ENCODE measurements at regions of chr3 and their contacts with region 1.

Region 1: DNA sequence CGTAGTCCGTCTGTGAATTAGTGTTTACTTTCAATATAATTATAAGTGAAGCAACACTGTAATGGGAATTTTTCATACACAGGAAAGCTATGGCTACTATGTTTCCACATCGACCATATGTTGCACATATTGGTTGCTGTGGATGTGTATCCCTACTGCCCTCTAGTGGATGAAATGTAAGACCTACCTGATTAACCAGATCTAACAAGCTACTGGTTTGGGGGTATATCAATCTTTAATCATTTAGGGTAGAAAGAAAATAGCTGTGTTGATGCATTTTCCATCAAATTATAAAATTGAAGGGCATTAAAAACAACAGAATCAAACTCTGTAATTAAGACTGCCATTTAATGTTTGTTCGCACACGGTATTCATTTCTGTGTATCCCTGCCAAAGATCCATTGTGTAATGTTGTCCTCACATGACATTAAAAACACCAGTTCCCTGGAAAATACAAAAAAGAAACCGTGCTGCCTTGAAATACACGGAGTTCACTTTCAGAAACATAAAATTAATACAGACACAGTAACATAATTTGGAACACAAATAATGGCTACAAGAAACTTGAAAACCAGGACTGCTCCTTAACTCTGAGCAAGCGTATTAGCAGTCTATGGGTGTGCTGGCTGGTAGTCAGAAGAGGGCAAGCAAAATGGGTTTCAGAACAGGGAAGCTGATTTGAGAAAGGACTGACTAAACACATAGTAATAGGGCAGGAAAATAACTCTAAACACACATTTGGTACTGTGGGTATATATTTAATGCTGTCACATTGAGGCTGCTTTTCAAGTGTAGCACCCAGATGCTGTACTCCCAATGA is 125.1 kb downstream of the TIGIT start:
- DNase-seq: no peak
- H3K4me3 Mint-ChIP-seq: peak overlapping the region; percentile 36
- H3K27ac Mint-ChIP-seq: peak overlapping the region; percentile 56
- H3K4me1 Mint-ChIP-seq: peaks cover 32% of the 10 kb centered on the region
- H3K27me3 Mint-ChIP-seq: no peaks in the 10 kb centered on the region

Region 2: GRCh38 chr3:113873814-113874526 is 545.0 kb before region 1 on chr3:
- CTCF ChIA-PET with region 1: no interaction called
- intact Hi-C with region 1: no loop called
- DNase-seq: no peak
- H3K4me3 Mint-ChIP-seq: no peak overlapping the region
- H3K27ac Mint-ChIP-seq: no peak overlapping the region
- H3K4me1 Mint-ChIP-seq: no peaks in the 10 kb centered on the region
- H3K27me3 Mint-ChIP-seq: no peaks in the 10 kb centered on the region

Region 3: DNA sequence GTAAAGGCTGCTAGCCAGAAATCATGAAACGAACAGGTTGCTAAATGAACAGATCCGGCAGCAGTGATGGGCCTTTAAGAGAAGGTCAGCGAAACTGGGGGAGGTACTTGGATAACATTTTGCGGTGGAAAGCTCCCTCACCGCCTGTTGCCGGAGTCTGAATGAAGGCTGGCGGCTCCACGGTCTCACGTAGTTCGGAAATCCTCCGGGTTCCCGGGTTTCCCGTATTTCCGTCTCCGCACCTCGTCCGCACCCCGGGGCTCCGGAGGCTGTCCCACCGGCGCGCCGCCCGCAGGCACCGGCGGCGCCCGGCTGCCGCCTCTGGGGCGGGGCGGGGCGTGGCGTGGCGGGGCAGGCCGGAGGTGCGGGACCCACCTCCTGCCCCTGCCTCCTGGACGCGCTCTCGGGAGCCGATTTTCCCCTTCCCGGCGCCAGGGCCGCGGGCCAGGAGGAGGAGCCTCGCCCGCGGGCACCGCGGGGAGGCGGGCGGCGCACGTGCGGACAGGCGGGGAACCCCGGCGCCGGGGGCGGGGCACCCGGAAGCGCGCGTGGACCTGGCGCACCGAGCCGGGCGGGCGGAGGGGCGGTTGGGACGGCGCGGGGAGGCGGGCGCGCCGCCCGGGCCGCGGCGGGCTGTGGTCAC is 471.4 kb before region 1 on chr3 and contains the start of gene ZDHHC23:
- CTCF ChIA-PET with region 1: no interaction called
- intact Hi-C with region 1: loop called (anchors 1 kb)
- DNase-seq: peak; percentile 61
- H3K4me3 Mint-ChIP-seq: peak within 1 kb of the TSS; percentile 68
- H3K27ac Mint-ChIP-seq: no peak within 1 kb of the TSS
- H3K4me1 Mint-ChIP-seq: peaks cover 11% of the 10 kb centered on the region
- H3K27me3 Mint-ChIP-seq: peaks cover 13% of the 10 kb centered on the region
- total RNA-seq, gene ZDHHC23: 5.4 TPM

Region 4: GRCh38 chr3:114133947-114134346 is 285.0 kb before region 1 on chr3:
- CTCF ChIA-PET with region 1: no interaction called
- intact Hi-C with region 1: no loop called
- DNase-seq: no peak
- H3K4me3 Mint-ChIP-seq: no peak overlapping the region
- H3K27ac Mint-ChIP-seq: no peak overlapping the region
- H3K4me1 Mint-ChIP-seq: no peaks in the 10 kb centered on the region
- H3K27me3 Mint-ChIP-seq: no peaks in the 10 kb centered on the region

Region 5: GRCh38 chr3:114213627-114214541 is 205.1 kb before region 1 on chr3:
- CTCF ChIA-PET with region 1: interaction called, 4 read pairs
- intact Hi-C with region 1: loop called (anchors 1 kb)
- DNase-seq: peak; percentile 88
- H3K4me3 Mint-ChIP-seq: no peak overlapping the region
- H3K27ac Mint-ChIP-seq: no peak overlapping the region
- H3K4me1 Mint-ChIP-seq: peaks cover 8% of the 10 kb centered on the region
- H3K27me3 Mint-ChIP-seq: no peaks in the 10 kb centered on the region

Region 6: DNA sequence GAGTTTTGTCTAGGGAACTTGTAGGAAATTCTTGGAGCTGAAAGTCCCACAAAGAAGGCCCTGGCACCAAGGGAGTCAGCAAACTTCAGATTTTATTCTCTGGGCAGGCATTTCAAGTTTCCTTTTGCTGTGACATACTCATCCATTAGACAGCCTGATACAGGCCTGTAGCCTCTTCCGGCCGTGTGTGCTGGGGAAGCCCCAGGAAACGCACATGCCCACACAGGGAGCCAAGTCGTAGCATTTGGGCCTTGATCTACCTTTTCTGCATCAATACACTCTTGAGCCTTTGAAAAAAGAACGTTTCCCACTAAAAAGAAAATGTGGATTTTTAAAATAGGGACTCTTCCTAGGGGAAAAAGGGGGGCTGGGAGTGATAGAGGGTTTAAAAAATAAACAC is 110.1 kb before region 1 on chr3:
- CTCF ChIA-PET with region 1: interaction called, 3 read pairs
- intact Hi-C with region 1: loop called (anchors 5 kb)
- DNase-seq: peak; percentile 57
- H3K4me3 Mint-ChIP-seq: peak overlapping the region; percentile 47
- H3K27ac Mint-ChIP-seq: peak overlapping the region; percentile 89
- H3K4me1 Mint-ChIP-seq: peaks cover 40% of the 10 kb centered on the region
- H3K27me3 Mint-ChIP-seq: no peaks in the 10 kb centered on the region

Region 7: GRCh38 chr3:114405202-114405990 is 13.5 kb before region 1 on chr3:
- CTCF ChIA-PET with region 1: interaction called, 15 read pairs
- intact Hi-C with region 1: no loop called
- DNase-seq: no peak
- H3K4me3 Mint-ChIP-seq: no peak overlapping the region
- H3K27ac Mint-ChIP-seq: no peak overlapping the region
- H3K4me1 Mint-ChIP-seq: no peaks in the 10 kb centered on the region
- H3K27me3 Mint-ChIP-seq: no peaks in the 10 kb centered on the region

Region 8: GRCh38 chr3:114454551-114455251 is 35.8 kb after region 1 on chr3:
- CTCF ChIA-PET with region 1: interaction called, 12 read pairs
- intact Hi-C with region 1: loop called (anchors 2 kb)
- DNase-seq: no peak
- H3K4me3 Mint-ChIP-seq: no peak overlapping the region
- H3K27ac Mint-ChIP-seq: no peak overlapping the region
- H3K4me1 Mint-ChIP-seq: peaks cover 6% of the 10 kb centered on the region
- H3K27me3 Mint-ChIP-seq: no peaks in the 10 kb centered on the region

Region 9: GRCh38 chr3:115147329-115148141 is 728.6 kb after region 1 on chr3:
- CTCF ChIA-PET with region 1: no interaction called
- intact Hi-C with region 1: loop called (anchors 10 kb)
- DNase-seq: peak; percentile 98
- H3K4me3 Mint-ChIP-seq: peak overlapping the region; percentile 82
- H3K27ac Mint-ChIP-seq: peak overlapping the region; percentile 96
- H3K4me1 Mint-ChIP-seq: peaks cover 20% of the 10 kb centered on the region
- H3K27me3 Mint-ChIP-seq: no peaks in the 10 kb centered on the region

Measured in activated naive CD4-positive, alpha-beta T cell treated with anti-CD3 and anti-CD28 coated beads for 36 hours (primary cell).